T-cell (primary cell): ENCODE measurements at regions of chr3 and their contacts with region 1.

Region 1: GRCh38 chr3:66971891-66972551 is 26.1 kb upstream of the KBTBD8 start:
- DNase-seq: peak; percentile 21 to 75 (median 49)
- ATAC-seq: peak; percentile 89 to 95 (median 92)
- H3K4me3 ChIP-seq: peak overlapping the region; percentile 50 to 71
- H3K4me3 Mint-ChIP-seq: peak overlapping the region; percentile 78 to 90 (median 82)
- H3K27ac ChIP-seq: peak overlapping the region; percentile 43
- H3K27ac Mint-ChIP-seq: peak overlapping the region; percentile 60 to 85
- H3K4me1 ChIP-seq: peaks cover 2 to 7% of the 10 kb centered on the region in 2 experiments
- H3K4me1 Mint-ChIP-seq: peaks cover 11 to 14% (median 12%) of the 10 kb centered on the region in 3 donors
- H3K27me3 ChIP-seq: no peaks in the 10 kb centered on the region
- H3K27me3 Mint-ChIP-seq: peaks cover 0 to 3% of the 10 kb centered on the region in 2 donors

Region 2: DNA sequence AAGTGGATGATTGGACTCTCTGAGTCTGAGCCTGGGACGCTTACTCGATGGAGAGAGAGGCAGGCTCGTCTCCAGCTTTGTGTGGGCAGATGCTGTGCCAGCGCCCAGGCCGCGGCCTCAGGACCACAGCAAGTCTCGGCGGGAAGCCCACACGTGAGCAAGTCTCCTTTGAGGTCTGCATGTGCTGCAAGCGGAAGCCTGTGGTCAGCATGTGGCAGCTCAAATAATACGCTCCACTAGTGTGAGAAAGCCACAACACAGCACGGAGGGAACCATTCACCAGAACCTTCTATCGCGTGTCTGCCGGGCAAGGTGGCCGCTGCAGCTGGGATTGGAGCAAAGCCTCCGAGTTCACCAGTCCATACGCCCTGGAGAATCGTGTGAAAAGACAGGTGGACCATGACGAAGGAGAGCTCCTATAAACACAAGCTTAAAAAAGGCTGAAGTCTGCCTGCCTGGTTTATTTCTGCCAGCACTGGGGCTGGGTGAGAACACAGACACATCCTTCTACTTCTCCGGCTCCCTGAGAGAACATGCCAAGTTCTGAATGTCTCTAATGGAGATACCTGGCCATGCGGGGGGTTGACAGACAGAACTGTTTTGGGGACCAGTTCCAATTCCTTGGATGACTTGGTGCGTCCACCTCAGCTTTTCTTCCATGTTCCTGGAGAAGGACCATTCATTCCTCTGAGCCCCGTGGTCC is 389.1 kb before region 1 on chr3:
- CTCF ChIA-PET with region 1: no interaction called
- POLR2A ChIA-PET with region 1: no interaction called
- DNase-seq: peak; percentile 16 to 82 (median 49)
- ATAC-seq: peak; percentile 83 to 97 (median 92)
- H3K4me3 ChIP-seq: no peak overlapping the region
- H3K4me3 Mint-ChIP-seq: peak overlapping the region in 1 of 3 donors; percentile 60
- H3K27ac ChIP-seq: no peak overlapping the region
- H3K27ac Mint-ChIP-seq: peak overlapping the region in 1 of 2 donors; percentile 10
- H3K4me1 ChIP-seq: peaks cover 10 to 22% of the 10 kb centered on the region in 2 experiments
- H3K4me1 Mint-ChIP-seq: peaks cover 18 to 23% (median 22%) of the 10 kb centered on the region in 3 donors
- H3K27me3 ChIP-seq: peaks cover 0 to 12% of the 10 kb centered on the region in 2 experiments
- H3K27me3 Mint-ChIP-seq: peaks cover 24 to 32% of the 10 kb centered on the region in 2 donors

Region 3: DNA sequence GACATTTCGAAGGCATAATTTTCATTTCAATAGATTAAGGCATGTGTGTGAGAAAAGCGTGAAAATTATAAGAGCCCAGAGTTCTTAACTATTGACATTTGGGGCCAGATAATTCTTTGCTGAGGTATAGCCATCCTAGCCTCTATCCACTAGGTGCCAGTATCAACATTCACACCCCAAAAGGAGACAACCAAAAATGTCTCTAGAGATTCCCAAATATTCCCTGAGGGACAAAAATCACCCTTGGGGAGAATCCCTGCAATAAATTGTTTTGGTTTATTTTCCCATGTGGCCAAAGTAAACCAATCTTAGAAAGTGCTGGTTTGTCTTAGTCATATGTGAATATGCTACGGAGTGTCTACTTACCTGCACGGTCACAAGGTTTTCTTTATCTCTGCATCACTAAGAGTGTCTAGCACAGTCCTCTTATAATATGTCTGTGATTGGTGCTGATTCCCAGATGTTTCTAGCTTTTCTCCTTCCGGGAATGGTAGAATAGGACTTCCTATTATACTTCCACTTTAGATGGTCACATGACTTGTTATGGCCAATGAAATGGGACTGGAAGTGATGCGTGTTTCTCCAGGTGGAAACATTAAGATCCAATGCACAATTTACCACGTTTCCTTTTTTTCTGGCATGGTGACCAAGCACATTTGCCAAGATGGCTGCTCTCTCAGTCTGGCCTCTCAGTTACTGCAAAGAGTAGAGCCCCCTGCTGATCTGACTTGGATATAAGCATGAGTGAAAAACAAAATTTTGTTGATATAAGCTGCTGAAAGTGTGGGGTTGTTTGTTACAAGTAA is 18.0 kb after region 1 on chr3:
- CTCF ChIA-PET with region 1: interaction called, 4 to 15 read pairs
- POLR2A ChIA-PET with region 1: no interaction called
- DNase-seq: peak in 1 of 35 experiments; percentile 12
- ATAC-seq: no peak
- H3K4me3 ChIP-seq: no peak overlapping the region
- H3K4me3 Mint-ChIP-seq: no peak overlapping the region
- H3K27ac ChIP-seq: no peak overlapping the region
- H3K27ac Mint-ChIP-seq: no peak overlapping the region
- H3K4me1 ChIP-seq: no peaks in the 10 kb centered on the region
- H3K4me1 Mint-ChIP-seq: no peaks in the 10 kb centered on the region
- H3K27me3 ChIP-seq: no peaks in the 10 kb centered on the region
- H3K27me3 Mint-ChIP-seq: peaks cover 18 to 21% of the 10 kb centered on the region in 2 donors

Region 4: DNA sequence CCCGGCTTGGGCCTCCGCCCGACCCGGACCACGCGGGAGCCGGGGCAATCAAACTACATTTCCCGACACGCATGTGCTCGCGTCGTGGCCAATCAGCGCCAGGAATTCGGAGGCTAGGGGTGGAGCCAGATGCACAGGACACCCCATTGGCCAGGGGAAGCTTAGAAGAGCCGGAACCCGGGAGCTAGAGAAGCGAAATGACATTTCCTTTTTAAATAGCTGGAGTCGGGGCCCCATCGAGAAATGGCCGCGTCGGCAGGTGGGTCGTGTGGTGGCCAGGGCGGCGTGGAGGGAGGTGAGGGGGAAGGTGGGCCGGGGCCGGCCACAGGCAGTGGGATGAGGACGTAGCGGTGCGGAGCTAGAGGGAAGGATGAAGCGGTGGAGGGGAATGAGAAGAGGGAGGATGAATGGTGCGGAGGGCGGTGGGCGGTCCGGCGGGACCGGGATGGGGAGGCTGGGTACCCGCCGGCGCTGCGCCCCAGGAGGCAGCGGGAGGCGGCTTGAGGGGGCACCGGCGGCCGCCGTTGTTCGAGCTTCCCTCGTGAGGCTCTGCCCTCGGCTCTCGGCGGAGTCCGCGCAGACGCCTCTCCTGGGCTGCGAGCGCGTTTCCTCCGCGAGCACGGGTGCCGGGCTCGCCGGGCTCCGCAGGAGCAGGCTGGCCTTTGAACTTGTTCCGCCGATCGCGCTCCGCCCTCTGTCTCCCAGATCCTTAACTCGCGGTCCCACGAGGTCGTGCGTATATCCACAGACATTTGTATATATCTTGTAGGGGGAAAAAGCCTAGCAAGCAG is 26.3 kb after region 1 on chr3 and contains the start of gene KBTBD8:
- CTCF ChIA-PET with region 1: interaction called, 4 to 34 read pairs
- POLR2A ChIA-PET with region 1: interaction called in 1 of 2 experiments, 7 read pairs
- DNase-seq: peak; percentile 22 to 98 (median 95)
- ATAC-seq: peak; percentile 95 to 98 (median 97)
- H3K4me3 ChIP-seq: peak within 1 kb of the TSS; percentile 69 to 70
- H3K4me3 Mint-ChIP-seq: peak within 1 kb of the TSS; percentile 90 to 95 (median 93)
- H3K27ac ChIP-seq: peak within 1 kb of the TSS; percentile 47
- H3K27ac Mint-ChIP-seq: peak within 1 kb of the TSS; percentile 89 to 95
- H3K4me1 ChIP-seq: peaks cover 6 to 14% of the 10 kb centered on the region in 2 experiments
- H3K4me1 Mint-ChIP-seq: peaks cover 22 to 37% (median 35%) of the 10 kb centered on the region in 3 donors
- H3K27me3 ChIP-seq: no peaks in the 10 kb centered on the region
- H3K27me3 Mint-ChIP-seq: peaks cover 14 to 22% of the 10 kb centered on the region in 2 donors
- total RNA-seq, gene KBTBD8: 3.3 to 11.5 (median 6.1) TPM

Region 5: DNA sequence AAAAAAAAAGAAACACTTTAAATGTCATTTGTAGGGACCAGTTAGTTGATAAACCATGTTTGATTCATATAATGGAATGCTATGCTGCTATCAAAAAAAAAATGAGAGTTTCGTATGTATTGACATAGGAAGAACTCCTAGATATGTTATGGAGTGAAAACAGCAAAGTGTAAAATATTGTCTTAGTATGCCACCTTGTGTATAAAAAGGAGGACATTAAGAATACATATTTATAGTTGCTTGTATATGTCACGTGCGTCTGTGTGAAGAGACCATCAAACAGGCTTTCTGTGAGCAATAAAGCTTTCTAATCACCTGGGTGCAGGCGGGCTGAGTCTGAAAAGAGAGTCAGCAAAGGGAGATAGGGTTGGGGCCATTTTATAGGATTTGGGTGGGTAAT is 65.6 kb after region 1 on chr3:
- CTCF ChIA-PET with region 1: interaction called in 1 of 2 experiments, 10 read pairs
- POLR2A ChIA-PET with region 1: no interaction called
- DNase-seq: peak in 1 of 35 experiments; percentile 4
- ATAC-seq: no peak
- H3K4me3 ChIP-seq: no peak overlapping the region
- H3K4me3 Mint-ChIP-seq: no peak overlapping the region
- H3K27ac ChIP-seq: no peak overlapping the region
- H3K27ac Mint-ChIP-seq: no peak overlapping the region
- H3K4me1 ChIP-seq: no peaks in the 10 kb centered on the region
- H3K4me1 Mint-ChIP-seq: no peaks in the 10 kb centered on the region
- H3K27me3 ChIP-seq: no peaks in the 10 kb centered on the region
- H3K27me3 Mint-ChIP-seq: peaks cover 0 to 2% of the 10 kb centered on the region in 2 donors

Region 6: GRCh38 chr3:68876112-68876713 is 1904.2 kb after region 1 on chr3:
- CTCF ChIA-PET with region 1: interaction called, 5 to 15 read pairs
- POLR2A ChIA-PET with region 1: no interaction called
- DNase-seq: peak in 21 of 35 experiments; percentile 2 to 71 (median 10)
- ATAC-seq: peak in 3 of 4 experiments; percentile 52 to 62 (median 53)
- H3K4me3 ChIP-seq: no peak overlapping the region
- H3K4me3 Mint-ChIP-seq: no peak overlapping the region
- H3K27ac ChIP-seq: no peak overlapping the region
- H3K27ac Mint-ChIP-seq: no peak overlapping the region
- H3K4me1 ChIP-seq: no peaks in the 10 kb centered on the region
- H3K4me1 Mint-ChIP-seq: no peaks in the 10 kb centered on the region
- H3K27me3 ChIP-seq: peaks cover 0 to 3% of the 10 kb centered on the region in 2 experiments
- H3K27me3 Mint-ChIP-seq: peaks cover 12 to 36% of the 10 kb centered on the region in 2 donors

Region 7: GRCh38 chr3:68893600-68894239 is 1921.7 kb after region 1 on chr3:
- CTCF ChIA-PET with region 1: interaction called, 3 to 14 read pairs
- POLR2A ChIA-PET with region 1: no interaction called
- DNase-seq: peak in 2 of 35 experiments; percentile 1 to 65
- ATAC-seq: no peak
- H3K4me3 ChIP-seq: no peak overlapping the region
- H3K4me3 Mint-ChIP-seq: no peak overlapping the region
- H3K27ac ChIP-seq: no peak overlapping the region
- H3K27ac Mint-ChIP-seq: no peak overlapping the region
- H3K4me1 ChIP-seq: no peaks in the 10 kb centered on the region
- H3K4me1 Mint-ChIP-seq: no peaks in the 10 kb centered on the region
- H3K27me3 ChIP-seq: peaks cover 0 to 7% of the 10 kb centered on the region in 2 experiments
- H3K27me3 Mint-ChIP-seq: peaks cover 10 to 11% of the 10 kb centered on the region in 2 donors